ENCODE measurements at regions of chr16 and their contacts with region 1.

Region 1: DNA sequence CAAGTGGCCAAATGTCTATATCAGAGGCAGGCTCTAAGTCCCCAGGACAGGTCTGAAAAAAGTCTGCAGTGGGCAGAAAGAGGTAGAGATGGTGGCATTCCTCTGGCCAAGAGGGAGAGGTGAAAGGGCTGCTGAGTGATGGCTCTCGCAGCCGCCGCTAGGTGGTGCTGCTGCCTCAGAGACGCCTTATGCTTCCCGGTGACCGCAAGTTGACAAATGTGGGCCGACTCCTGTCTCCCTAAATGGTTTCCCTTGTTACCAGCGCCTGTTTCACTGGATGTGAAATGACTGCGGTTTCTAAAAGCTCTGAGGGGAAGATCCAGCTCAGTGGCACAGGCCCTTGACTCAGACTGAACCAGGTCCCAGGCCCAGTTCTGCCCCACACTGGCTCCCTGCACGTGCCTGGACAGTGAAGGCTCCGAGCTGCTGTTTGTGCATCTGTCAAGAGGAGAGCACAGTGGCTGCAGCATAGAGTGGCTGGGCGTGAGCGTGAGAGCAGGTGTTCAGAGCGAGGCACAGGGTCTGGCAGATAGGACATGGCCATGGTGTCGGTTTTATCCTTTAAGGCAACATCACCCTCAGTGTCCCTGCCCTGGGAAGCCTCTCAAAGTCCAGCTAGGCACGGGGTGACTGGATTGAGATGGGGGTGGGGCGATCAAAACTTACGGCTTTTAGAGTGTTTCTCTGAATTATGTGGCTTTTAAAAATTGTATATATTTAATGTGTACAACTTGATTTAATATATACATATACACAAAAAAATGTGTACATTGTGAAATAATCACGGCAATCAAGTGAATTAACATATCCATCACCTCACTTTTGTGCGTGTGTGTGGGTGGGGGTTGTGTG is 19.9 kb downstream of the CLEC16A start:
- DNase-seq: peak; percentile 94

Region 2: GRCh38 chr16:11025120-11025531 is 60.9 kb after region 1 on chr16:
- intact Hi-C with region 1: no loop called
- DNase-seq: no peak

Region 3: DNA sequence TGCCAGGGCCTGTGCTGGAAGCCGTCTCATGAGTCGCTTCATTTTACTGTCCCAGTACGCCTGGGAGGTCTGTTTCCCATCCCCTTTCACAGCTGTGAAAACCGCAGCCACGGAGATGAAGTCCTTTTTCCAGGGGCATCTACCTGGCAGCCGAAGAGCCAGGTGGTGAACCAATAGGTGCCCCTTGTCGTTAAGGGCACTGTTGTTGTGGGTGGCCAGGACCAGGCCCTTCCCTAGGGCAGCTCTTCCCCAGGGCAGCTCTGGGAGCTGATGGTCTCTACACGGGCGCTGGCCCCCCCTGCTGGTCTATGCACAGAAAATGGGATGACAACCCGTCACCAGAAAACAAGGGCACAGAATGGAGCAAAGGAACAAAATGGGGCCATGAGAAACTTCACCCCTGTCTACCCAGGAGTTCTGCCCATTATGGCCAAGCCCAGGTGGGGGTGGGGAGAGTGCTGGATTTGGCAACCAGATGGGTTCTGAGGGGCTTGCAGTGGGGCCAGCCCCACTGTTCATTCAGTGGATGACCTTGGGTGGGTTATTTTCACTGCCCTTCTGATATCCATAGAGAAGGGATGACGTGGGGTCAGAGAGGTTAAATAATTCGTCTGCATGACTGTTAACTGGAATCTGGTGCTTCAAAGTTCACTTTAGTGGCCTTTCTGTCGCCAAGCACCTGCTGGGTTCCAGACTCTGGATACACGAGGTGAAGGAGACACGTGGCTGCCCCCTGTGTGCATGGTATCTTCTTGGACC is 392.5 kb after region 1 on chr16:
- intact Hi-C with region 1: loop called (anchors 5 to 10 kb)
- DNase-seq: peak; percentile 89

Measured in posterior vena cava (tissue), 2 donors.